Natural killer cell (primary cell): ENCODE measurements at regions of chr15 and their contacts with region 1.

Region 1: DNA sequence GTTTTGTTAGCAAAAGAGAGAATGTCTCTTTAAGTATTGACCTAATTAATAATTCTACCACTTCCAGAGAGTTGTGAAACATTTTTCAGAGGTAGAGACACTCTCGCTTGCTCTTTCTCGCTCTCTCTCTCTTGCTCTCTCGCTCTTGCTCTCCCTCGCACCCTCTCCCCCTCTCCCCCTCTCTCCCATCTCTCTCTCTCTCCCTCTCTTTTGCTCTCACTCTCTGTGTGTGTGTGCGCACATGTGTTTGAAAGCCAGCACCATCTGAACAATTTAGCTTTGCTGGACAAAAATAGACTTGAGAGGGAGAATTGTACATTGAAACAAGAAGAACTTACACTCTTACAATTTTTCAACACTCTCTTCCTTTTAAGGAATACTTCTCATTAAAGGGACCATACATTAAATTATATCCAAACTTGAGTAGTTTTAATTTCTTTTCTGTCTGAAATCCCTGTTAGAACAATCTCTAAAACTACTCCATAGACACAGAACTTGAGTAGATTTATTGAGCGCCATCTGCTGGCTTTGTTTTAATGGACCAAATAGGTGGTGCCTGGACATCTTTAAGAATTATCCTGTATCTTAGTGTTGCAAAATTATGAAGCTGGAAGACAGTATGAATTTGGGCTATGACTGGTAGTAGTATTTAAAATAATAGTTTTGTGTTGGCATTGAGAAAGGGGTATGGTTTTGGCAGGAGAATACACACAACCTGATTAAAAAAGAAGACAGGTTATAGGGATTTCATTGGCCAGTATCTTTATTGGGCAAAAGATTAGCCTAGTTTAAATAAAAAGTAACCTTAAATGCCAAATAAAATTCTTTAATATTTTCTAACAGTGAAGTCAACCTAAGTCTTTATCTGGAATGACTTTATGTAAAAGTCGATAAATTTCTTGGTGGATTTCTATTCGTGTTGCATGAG is 124.6 kb downstream of the AKAP13 start:
- DNase-seq: peak in 1 of 2 donors; percentile 76
- ATAC-seq: peak in 2 of 3 donors; percentile 52 to 57
- H3K4me3 ChIP-seq: no peak overlapping the region
- H3K4me3 Mint-ChIP-seq: no peak overlapping the region
- H3K27ac ChIP-seq: no peak overlapping the region
- H3K27ac Mint-ChIP-seq: peak overlapping the region; percentile 4 to 71
- H3K4me1 ChIP-seq: no peaks in the 10 kb centered on the region
- H3K4me1 Mint-ChIP-seq: peaks cover 6 to 32% of the 10 kb centered on the region in 2 donors
- H3K27me3 ChIP-seq: no peaks in the 10 kb centered on the region
- H3K27me3 Mint-ChIP-seq: no peaks in the 10 kb centered on the region
- CTCF ChIP-seq: peak; percentile 71

Region 2: DNA sequence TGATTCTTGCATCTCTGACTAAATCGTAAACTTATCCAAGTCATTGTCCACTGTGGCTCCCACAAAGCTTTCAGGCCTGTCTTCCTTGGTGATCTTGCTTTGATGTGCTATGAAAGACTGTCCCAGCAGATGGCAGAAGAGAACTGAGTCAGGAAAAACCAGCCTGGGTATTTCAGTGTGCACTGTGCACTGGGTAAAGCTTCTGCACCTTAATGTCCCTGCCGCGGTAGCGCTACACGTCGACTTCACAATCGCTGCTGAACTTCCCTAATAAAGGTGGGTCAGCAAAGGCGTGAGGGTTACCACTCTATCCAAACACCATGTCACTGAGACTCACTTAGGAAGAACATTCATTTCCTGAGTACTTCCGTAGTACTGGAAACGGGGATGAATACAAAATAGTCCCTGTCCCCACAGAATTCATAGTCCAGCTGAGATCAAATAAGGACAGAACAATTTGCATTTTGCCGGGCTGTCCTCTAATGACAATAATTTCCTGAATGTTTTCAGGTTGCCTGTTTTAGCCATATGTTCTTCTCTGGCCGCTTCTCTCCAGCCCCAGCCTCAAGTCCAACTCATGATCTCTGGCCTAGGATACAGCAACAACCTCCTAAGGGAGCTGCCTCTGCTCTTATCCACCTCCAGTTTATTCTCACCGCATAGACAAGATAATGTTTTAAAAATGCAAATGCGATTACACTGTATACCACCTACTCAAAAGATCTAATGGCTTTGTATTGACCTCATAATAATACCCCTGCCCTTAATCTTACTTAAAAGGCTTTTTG is 208.2 kb before region 1 on chr15:
- intact Hi-C with region 1: loop called (anchors 1 kb)
- DNase-seq: peak; percentile 33 to 87
- ATAC-seq: peak; percentile 87 to 99 (median 99)
- H3K4me3 ChIP-seq: no peak overlapping the region
- H3K4me3 Mint-ChIP-seq: peak overlapping the region; percentile 6
- H3K27ac ChIP-seq: no peak overlapping the region
- H3K27ac Mint-ChIP-seq: peak overlapping the region in 1 of 2 donors; percentile 49
- H3K4me1 ChIP-seq: peaks cover 3% of the 10 kb centered on the region
- H3K4me1 Mint-ChIP-seq: peaks cover 10 to 15% of the 10 kb centered on the region in 2 donors
- H3K27me3 ChIP-seq: no peaks in the 10 kb centered on the region
- H3K27me3 Mint-ChIP-seq: peaks cover 9% of the 10 kb centered on the region in 2 donors
- CTCF ChIP-seq: peak; percentile 69